BJ (cell line): ENCODE measurements at regions of chr6 and their contacts with region 1.

Region 1: GRCh38 chr6:30453508-30454116 is 35.7 kb upstream of the HLA-E start:
- DNase-seq: peak; percentile 11
- H3K4me3 ChIP-seq: no peak overlapping the region
- H3K27me3 ChIP-seq: peaks cover 45% of the 10 kb centered on the region
- CTCF ChIP-seq: peak; percentile 69

Region 2: DNA sequence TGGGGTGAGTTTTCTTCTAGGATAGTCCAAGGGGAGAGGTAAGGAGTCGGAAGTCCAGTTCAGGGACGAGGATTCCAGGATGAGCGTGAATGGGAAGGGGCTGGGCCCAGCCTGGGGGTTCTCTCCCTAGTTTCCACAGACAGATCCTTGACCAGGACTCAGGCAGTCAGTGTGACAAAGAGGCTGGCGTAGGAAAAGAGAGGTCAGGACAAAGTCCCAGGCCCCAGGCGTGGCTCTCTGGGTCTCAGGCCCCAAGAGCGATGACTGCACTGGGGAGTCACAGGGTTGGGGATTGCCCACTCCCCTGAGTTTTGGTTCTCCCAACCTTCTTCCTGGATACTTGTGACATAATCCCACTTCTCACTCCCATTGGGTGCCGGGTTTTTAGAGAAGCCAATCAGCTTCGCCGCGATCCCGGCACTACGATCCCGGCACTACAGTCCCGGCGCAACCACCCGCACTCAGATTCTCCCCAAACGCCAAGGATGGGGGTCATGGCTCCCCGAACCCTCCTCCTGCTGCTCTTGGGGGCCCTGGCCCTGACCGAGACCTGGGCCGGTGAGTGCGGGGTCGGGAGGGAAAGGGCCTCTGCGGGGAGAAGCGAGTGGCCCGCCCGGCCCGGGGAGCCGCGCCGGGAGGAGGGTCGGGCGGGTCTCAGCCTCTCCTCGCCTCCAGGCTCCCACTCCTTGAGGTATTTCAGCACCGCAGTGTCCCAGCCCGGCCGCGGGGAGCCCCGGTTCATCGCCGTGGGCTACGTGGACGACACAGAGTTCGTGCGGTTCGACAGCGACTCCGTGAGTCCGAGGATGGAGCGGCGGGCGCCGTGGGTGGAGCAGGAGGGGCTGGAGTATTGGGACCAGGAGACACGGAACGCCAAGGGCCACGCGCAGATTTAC is 194.2 kb before region 1 on chr6:
- CTCF ChIA-PET with region 1: no interaction called
- POLR2A ChIA-PET with region 1: no interaction called
- DNase-seq: peak; percentile 37
- H3K4me3 ChIP-seq: peak overlapping the region; percentile 72
- H3K27me3 ChIP-seq: peaks cover 4% of the 10 kb centered on the region; the same call in 1 of the 2 replicates
- CTCF ChIP-seq: peak; percentile 57

Region 3: GRCh38 chr6:30340589-30341054 is 113.0 kb before region 1 on chr6:
- CTCF ChIA-PET with region 1: no interaction called
- POLR2A ChIA-PET with region 1: no interaction called
- DNase-seq: no peak
- H3K4me3 ChIP-seq: no peak overlapping the region
- H3K27me3 ChIP-seq: no peaks in the 10 kb centered on the region
- CTCF ChIP-seq: no peak

Region 4: GRCh38 chr6:30441171-30441570 is 12.4 kb before region 1 on chr6:
- CTCF ChIA-PET with region 1: interaction called, 10 read pairs
- POLR2A ChIA-PET with region 1: no interaction called
- DNase-seq: no peak
- H3K4me3 ChIP-seq: no peak overlapping the region
- H3K27me3 ChIP-seq: peaks cover 21% of the 10 kb centered on the region
- CTCF ChIP-seq: no peak

Region 5: GRCh38 chr6:30463651-30464618 is 10.3 kb after region 1 on chr6:
- CTCF ChIA-PET with region 1: interaction called, 46 read pairs
- POLR2A ChIA-PET with region 1: no interaction called
- DNase-seq: no peak
- H3K4me3 ChIP-seq: no peak overlapping the region
- H3K27me3 ChIP-seq: peaks cover 63% of the 10 kb centered on the region
- CTCF ChIP-seq: no peak

Region 6: GRCh38 chr6:30470968-30471367 is 17.4 kb after region 1 on chr6:
- CTCF ChIA-PET with region 1: interaction called, 46 read pairs
- POLR2A ChIA-PET with region 1: no interaction called
- DNase-seq: no peak
- H3K4me3 ChIP-seq: no peak overlapping the region
- H3K27me3 ChIP-seq: peaks cover 19% of the 10 kb centered on the region
- CTCF ChIP-seq: no peak